ENCODE measurements at regions of chr12 and their contacts with region 1.

Region 1: DNA sequence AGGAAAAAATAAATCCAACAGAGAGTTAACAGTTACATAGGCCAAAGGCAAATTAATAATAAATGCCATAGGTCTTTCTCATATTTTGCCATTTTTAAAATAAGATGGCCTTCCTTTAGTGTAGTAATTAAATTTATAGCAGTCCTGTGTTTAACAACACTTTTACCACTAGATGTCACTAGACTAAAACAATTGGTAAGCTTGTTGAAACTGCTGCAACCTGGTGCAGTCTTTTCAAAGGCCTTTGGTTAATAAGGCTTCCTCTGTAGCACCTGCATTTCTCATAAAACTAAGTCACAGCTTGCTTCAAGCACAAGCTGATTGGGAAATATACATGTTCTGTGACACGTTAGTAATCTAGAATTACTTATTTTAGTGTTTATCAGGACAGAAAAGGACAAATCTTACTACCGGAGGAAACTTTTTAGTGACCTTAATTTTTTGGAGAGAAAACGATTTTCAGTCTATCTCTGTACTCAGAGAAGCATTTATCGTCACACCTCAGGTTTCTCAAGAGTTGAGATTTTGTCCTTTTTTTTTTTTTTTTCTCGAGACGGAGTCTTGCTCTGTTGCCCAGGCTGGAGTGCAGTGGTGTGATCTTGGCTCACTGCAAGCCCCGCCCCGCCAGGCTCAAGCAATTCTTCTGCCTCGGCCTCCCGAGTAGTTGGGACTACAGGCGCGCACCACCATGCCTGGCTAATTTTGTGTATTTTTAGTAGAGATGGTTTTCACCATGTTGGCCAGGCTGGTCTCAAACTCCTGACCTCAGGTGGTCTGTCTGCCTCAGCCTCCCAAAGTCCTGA is 20.0 kb downstream of the BORCS5 start:
- DNase-seq: peak; percentile 77
- H3K4me3 ChIP-seq: no peak overlapping the region
- CTCF ChIP-seq: peak; percentile 40

Region 2: DNA sequence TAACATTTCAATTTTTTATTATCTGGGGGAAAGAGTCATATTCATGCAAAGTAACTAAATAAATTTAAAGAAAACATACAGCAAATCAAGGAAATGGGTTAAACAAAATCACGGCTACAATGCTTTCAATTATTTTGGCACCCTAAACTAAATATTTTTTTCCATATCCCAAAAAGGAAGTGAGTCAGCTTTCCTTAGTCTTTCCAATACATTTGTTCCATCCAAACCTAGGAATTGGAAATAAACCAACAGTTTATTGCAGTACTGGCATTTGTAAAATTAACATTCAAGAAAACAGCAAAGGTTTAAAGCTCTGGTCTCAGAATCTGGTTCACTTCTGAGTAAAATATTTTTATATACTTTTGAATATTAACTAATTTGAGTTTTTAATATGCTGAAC is 216.9 kb before region 1 on chr12:
- in situ Hi-C with region 1: no loop called
- DNase-seq: peak; percentile 62
- H3K4me3 ChIP-seq: no peak overlapping the region
- CTCF ChIP-seq: no peak

Region 3: GRCh38 chr12:12684375-12685106 is 307.7 kb after region 1 on chr12:
- in situ Hi-C with region 1: no loop called
- DNase-seq: peak; percentile 16
- H3K4me3 ChIP-seq: no peak overlapping the region
- CTCF ChIP-seq: no peak

Region 4: GRCh38 chr12:12724661-12725545 is 348.1 kb after region 1 on chr12:
- in situ Hi-C with region 1: loop called (anchors 25 kb)
- DNase-seq: peak; percentile 98
- H3K4me3 ChIP-seq: peak overlapping the region; percentile 66
- CTCF ChIP-seq: no peak